GM12878 (cell line): ENCODE measurements at regions of chr11 and their contacts with region 1.

Region 1: GRCh38 chr11:3854977-3855807 is at the start of gene STIM1:
- DNase-seq: peak; percentile 88
- ATAC-seq: peak; percentile 76
- H3K4me3 ChIP-seq: peak within 1 kb of the TSS; percentile 94
- H3K27ac ChIP-seq: peak within 1 kb of the TSS; percentile 97
- H3K4me1 ChIP-seq: peaks cover 32% of the 10 kb centered on the region
- H3K27me3 ChIP-seq: no peaks in the 10 kb centered on the region
- CTCF ChIP-seq: peak; percentile 87 to 98 (median 93); a peak in 5 of 6 replicates
- EP300 ChIP-seq: no peak
- POLR2A ChIP-seq: peak; percentile 72
- RAD21 ChIP-seq: peak; percentile 92
- polyA plus RNA-seq, gene STIM1: 8.6 to 9.9 TPM

Region 2: GRCh38 chr11:3807909-3808860 is 47.0 kb before region 1 on chr11 and contains the start of gene PGAP2:
- CTCF ChIA-PET with region 1: interaction called, 21 read pairs
- POLR2A ChIA-PET with region 1: interaction called, 4 read pairs
- RAD21 ChIA-PET with region 1: interaction called, 10 read pairs
- SMC1A ChIA-PET with region 1: interaction called, 6 read pairs
- in situ Hi-C with region 1: no loop called
- intact Hi-C with region 1: no loop called
- DNase-seq: no peak
- ATAC-seq: peak; percentile 89
- H3K4me3 ChIP-seq: peak within 1 kb of the TSS; percentile 92
- H3K27ac ChIP-seq: peak within 1 kb of the TSS; percentile 57
- H3K4me1 ChIP-seq: no peaks in the 10 kb centered on the region
- H3K27me3 ChIP-seq: no peaks in the 10 kb centered on the region
- CTCF ChIP-seq: peak; percentile 71 to 75 (median 73)
- EP300 ChIP-seq: no peak
- POLR2A ChIP-seq: peak; percentile 46; the same call in 1 of the 2 replicates
- RAD21 ChIP-seq: peak; percentile 62
- polyA plus RNA-seq, gene PGAP2: 25.4 to 37.4 TPM

Region 3: GRCh38 chr11:3886985-3887384 is 31.8 kb after region 1 on chr11:
- CTCF ChIA-PET with region 1: interaction called, 1,047 read pairs
- POLR2A ChIA-PET with region 1: interaction called, 405 read pairs
- RAD21 ChIA-PET with region 1: interaction called, 253 read pairs
- SMC1A ChIA-PET with region 1: interaction called, 633 read pairs
- in situ Hi-C with region 1: no loop called
- intact Hi-C with region 1: no loop called
- DNase-seq: no peak
- ATAC-seq: no peak
- H3K4me3 ChIP-seq: no peak overlapping the region
- H3K27ac ChIP-seq: no peak overlapping the region
- H3K4me1 ChIP-seq: peaks cover 28% of the 10 kb centered on the region
- H3K27me3 ChIP-seq: no peaks in the 10 kb centered on the region
- CTCF ChIP-seq: no peak
- EP300 ChIP-seq: no peak
- POLR2A ChIP-seq: no peak
- RAD21 ChIP-seq: no peak

Region 4: DNA sequence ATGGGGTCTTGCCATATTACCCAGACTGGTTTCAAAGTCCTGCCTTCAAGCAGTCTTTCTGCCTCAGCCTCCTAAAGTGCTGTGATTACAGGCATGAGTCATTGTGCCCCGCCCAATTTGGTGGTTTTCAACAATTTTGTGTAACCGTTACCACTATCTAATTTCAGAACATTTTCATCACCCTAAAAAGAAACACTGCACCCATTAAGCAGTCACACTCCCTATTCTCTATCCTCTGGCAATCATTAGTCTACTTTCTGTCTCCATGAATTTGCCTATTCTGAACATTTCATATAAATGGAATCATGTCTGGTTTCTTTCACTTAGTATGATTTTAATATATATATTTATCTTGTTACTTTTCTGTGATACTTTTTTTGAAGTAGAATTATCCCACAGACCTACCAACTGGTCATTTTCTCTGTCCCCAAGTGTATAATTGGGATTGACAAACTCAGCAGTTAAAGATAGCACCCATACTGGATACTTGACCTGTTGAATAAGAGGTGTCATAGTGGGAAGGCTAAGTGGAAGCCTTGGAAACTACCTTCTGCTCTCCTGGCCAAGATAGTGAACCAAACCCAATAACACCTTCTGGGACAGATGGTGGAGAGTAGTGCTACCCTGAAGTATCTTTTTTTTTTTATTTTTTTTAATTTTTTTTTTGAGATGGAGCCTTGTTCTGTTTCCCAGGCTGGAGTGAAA is 65.1 kb after region 1 on chr11:
- CTCF ChIA-PET with region 1: interaction called, 47 read pairs
- POLR2A ChIA-PET with region 1: interaction called, 4 read pairs
- RAD21 ChIA-PET with region 1: interaction called, 38 read pairs
- SMC1A ChIA-PET with region 1: interaction called, 28 read pairs
- in situ Hi-C with region 1: no loop called
- intact Hi-C with region 1: loop called (anchors 2 kb)
- DNase-seq: peak; percentile 57
- ATAC-seq: peak; percentile 91
- H3K4me3 ChIP-seq: peak overlapping the region; percentile 19; the same call in 1 of the 2 replicates
- H3K27ac ChIP-seq: peak overlapping the region; percentile 27; the same call in 1 of the 2 replicates
- H3K4me1 ChIP-seq: peaks cover 6% of the 10 kb centered on the region
- H3K27me3 ChIP-seq: no peaks in the 10 kb centered on the region
- CTCF ChIP-seq: no peak
- EP300 ChIP-seq: peak in 1 of 2 experiments; percentile 50; a peak in 2 of 4 replicates
- POLR2A ChIP-seq: no peak
- RAD21 ChIP-seq: no peak

Region 5: DNA sequence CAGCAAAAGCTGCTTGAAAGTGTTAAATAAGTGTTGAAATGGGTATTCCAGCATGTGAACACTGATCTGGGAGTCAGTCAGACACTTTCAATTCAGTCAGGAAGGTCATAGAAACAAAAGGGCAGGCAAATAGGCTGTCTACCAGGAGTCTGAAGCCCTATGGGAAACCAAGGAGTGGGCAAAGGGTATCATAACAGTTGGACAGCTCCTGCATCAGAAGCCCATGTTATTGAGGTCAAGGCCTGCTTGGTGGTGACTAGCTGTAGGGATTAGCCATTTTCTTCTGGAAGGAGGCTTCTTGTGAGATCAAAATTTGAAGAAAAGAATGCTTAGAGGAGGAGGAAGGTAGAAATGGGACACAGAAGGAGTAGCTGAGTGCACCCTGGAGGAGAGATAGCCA is 97.5 kb after region 1 on chr11:
- CTCF ChIA-PET with region 1: interaction called, 51 read pairs
- POLR2A ChIA-PET with region 1: interaction called, 7 read pairs
- RAD21 ChIA-PET with region 1: interaction called, 41 read pairs
- SMC1A ChIA-PET with region 1: interaction called, 41 read pairs
- in situ Hi-C with region 1: no loop called
- intact Hi-C with region 1: loop called (anchors 2 kb)
- DNase-seq: no peak
- ATAC-seq: no peak
- H3K4me3 ChIP-seq: no peak overlapping the region
- H3K27ac ChIP-seq: no peak overlapping the region
- H3K4me1 ChIP-seq: peaks cover 31% of the 10 kb centered on the region
- H3K27me3 ChIP-seq: no peaks in the 10 kb centered on the region
- CTCF ChIP-seq: no peak
- EP300 ChIP-seq: no peak
- POLR2A ChIP-seq: no peak
- RAD21 ChIP-seq: no peak

Region 6: GRCh38 chr11:4044976-4045646 is 189.9 kb after region 1 on chr11:
- CTCF ChIA-PET with region 1: interaction called, 15 read pairs
- POLR2A ChIA-PET with region 1: interaction called, 5 read pairs
- RAD21 ChIA-PET with region 1: interaction called, 12 read pairs
- SMC1A ChIA-PET with region 1: interaction called, 7 read pairs
- in situ Hi-C with region 1: no loop called
- intact Hi-C with region 1: no loop called
- DNase-seq: no peak
- ATAC-seq: no peak; the same call in 2 of the 3 replicates
- H3K4me3 ChIP-seq: no peak overlapping the region
- H3K27ac ChIP-seq: no peak overlapping the region
- H3K4me1 ChIP-seq: no peaks in the 10 kb centered on the region
- H3K27me3 ChIP-seq: no peaks in the 10 kb centered on the region
- CTCF ChIP-seq: no peak
- EP300 ChIP-seq: no peak
- POLR2A ChIP-seq: no peak
- RAD21 ChIP-seq: no peak

Region 7: GRCh38 chr11:5339771-5340322 is 1484.7 kb after region 1 on chr11:
- CTCF ChIA-PET with region 1: no interaction called
- POLR2A ChIA-PET with region 1: no interaction called
- RAD21 ChIA-PET with region 1: no interaction called
- SMC1A ChIA-PET with region 1: no interaction called
- in situ Hi-C with region 1: loop called (anchors 25 kb)
- intact Hi-C with region 1: no loop called
- DNase-seq: peak; percentile 39
- ATAC-seq: peak; percentile 74
- H3K4me3 ChIP-seq: no peak overlapping the region
- H3K27ac ChIP-seq: no peak overlapping the region
- H3K4me1 ChIP-seq: no peaks in the 10 kb centered on the region
- H3K27me3 ChIP-seq: no peaks in the 10 kb centered on the region
- CTCF ChIP-seq: no peak
- EP300 ChIP-seq: peak in 1 of 2 experiments; percentile 26; a peak in 1 of 4 replicates
- POLR2A ChIP-seq: no peak
- RAD21 ChIP-seq: no peak